ENCODE measurements at regions of chr9 and their contacts with region 1.

Region 1: DNA sequence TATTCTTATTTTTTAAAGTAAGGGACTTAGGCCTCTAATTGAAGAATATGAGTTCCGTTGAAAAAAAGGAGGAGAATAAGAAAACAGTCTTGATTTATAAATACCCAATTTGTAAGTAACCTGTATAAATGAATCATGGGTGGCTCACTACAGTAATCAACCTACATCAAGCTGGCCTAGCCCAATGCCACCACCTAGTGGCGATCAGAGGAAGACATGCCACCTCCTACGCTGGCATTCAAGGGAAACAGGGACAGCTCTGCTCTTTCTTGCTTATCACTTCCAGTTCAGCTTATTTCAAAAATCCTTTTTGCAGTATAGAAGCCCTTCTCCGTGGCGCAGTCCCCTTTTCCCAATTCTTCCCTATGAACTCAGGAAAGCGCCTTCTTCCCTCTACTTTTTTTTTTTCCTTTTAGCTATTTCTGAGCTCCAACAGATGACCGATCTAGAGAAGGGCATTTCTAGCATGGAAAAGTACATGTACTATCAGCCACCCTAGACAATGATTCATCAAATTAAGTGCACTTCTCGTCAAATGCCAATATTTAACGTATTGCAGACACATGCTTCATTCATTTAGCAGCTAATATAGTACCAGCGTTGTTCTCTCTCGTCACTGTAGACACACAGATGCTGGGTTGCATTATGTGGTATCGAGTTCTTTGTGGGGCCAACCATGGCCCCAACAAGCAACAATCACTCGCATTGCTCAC is 28.3 kb downstream of the PTPN3 start:
- DNase-seq: peak; percentile 69 to 86
- ATAC-seq: peak; percentile 97 to 98
- H3K4me3 ChIP-seq: no peak overlapping the region
- H3K27ac ChIP-seq: peak overlapping the region; percentile 66 to 79
- H3K4me1 ChIP-seq: peaks cover 55% of the 10 kb centered on the region
- CTCF ChIP-seq: peak; percentile 93
- EP300 ChIP-seq: no peak
- POLR2A ChIP-seq: no peak
- RAD21 ChIP-seq: peak; percentile 89 to 92

Region 2: DNA sequence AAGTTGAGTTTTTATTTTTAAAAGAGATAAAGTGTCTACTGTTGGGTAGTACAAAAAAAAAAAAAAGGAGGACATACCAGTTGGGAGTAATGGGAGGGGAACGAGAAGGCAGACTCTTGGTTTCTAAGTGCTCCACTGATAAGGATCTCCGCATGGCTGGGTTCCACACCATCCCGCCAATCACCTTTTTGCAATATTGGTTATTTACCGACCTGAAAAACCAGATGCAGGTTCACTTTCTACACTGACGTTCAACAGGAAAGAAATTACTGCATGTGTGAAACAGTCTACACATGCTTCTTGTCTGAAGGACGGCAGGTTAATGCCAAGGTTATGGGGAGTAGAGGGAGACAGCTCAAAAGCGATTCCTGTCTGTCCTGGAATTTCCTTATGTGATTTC is 47.2 kb before region 1 on chr9:
- CTCF ChIA-PET with region 1: interaction called, 20 read pairs
- POLR2A ChIA-PET with region 1: no interaction called
- DNase-seq: no peak
- ATAC-seq: no peak
- H3K4me3 ChIP-seq: no peak overlapping the region
- H3K27ac ChIP-seq: no peak overlapping the region
- H3K4me1 ChIP-seq: no peaks in the 10 kb centered on the region
- CTCF ChIP-seq: no peak
- EP300 ChIP-seq: no peak
- POLR2A ChIP-seq: no peak
- RAD21 ChIP-seq: no peak

Region 3: DNA sequence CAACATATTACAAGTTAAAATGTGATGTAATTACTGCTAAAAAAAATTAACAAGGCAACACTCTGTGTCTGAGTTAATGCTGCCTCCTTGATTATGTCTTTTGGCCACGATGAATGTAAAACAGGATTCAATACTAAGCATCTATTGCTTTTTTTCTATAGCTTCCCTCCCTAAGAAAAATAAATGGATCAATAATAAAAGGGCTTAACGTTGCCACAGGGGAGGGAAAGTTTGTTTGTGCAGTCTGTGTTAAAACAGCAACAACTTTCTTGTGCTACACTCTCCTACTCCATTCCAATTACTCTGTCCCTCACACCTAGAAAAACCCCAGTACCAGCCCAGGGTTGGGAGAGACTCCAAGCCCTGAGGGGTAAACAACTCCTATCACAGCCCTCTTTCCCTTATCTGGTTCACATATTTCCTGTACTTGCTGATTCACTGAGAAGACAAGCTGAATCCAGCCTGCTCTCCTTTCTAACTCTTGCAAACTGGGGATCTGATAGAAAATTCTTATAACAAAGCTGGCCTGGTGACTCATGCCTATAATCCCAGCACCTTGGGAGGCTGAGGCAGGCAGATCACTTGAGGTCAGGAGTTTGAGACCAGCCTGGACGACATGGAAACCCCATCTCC is 16.5 kb before region 1 on chr9:
- CTCF ChIA-PET with region 1: interaction called, 173 read pairs
- POLR2A ChIA-PET with region 1: interaction called, 3 read pairs
- DNase-seq: peak; percentile 42 to 71
- ATAC-seq: peak; percentile 84 to 88
- H3K4me3 ChIP-seq: no peak overlapping the region
- H3K27ac ChIP-seq: peak overlapping the region; percentile 81 to 87
- H3K4me1 ChIP-seq: peaks cover 56% of the 10 kb centered on the region
- CTCF ChIP-seq: no peak
- EP300 ChIP-seq: peak in 1 of 2 experiments; percentile 19; a peak in 1 of 5 replicates
- POLR2A ChIP-seq: no peak
- RAD21 ChIP-seq: no peak

Region 4: GRCh38 chr9:109499631-109500410 is 30.0 kb after region 1 on chr9:
- CTCF ChIA-PET with region 1: interaction called, 18 read pairs
- POLR2A ChIA-PET with region 1: interaction called, 9 read pairs
- DNase-seq: peak; percentile 69 to 74
- ATAC-seq: peak; percentile 82 to 95
- H3K4me3 ChIP-seq: peak overlapping the region; percentile 50
- H3K27ac ChIP-seq: peak overlapping the region; percentile 61 to 97
- H3K4me1 ChIP-seq: peaks cover 24% of the 10 kb centered on the region
- CTCF ChIP-seq: no peak
- EP300 ChIP-seq: no peak
- POLR2A ChIP-seq: peak; percentile 41; the same call in 1 of the 2 replicates
- RAD21 ChIP-seq: no peak

Region 5: DNA sequence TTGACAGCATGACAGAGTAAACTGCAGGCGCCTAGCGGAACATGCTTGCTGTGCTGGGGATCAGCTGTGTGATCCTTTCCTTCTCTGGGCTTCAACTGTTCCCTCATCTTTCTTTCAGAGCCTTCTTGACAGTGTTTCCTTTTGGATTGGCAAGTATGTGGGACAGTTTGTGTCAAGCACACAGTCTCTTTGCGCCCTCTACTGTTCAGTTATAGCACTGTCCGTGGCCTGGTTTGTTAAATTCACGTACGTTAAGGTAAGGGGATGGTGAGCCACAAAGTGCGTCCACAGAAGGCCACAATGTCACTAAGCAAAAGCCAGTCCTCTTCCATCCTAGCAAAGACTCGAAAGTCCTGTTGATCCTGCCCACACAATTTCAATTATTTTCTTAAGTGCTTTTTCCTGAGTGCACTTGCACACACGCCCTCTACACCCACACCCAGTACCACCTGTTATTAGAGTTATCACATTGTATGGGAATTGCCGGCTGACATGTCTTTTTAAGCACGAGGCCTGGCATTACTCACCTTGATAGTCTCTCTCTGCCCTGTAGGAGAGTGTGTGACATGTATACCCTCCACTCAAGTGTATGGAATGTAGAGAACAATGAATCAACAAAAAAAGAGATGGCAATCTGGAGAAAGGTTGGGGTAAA is 50.8 kb after region 1 on chr9:
- CTCF ChIA-PET with region 1: interaction called, 19 read pairs
- POLR2A ChIA-PET with region 1: interaction called, 5 read pairs
- DNase-seq: peak; percentile 81
- ATAC-seq: peak; percentile 95 to 98
- H3K4me3 ChIP-seq: no peak overlapping the region
- H3K27ac ChIP-seq: no peak overlapping the region
- H3K4me1 ChIP-seq: no peaks in the 10 kb centered on the region; the same call in 2 of the 3 replicates
- CTCF ChIP-seq: peak; percentile 95
- EP300 ChIP-seq: no peak
- POLR2A ChIP-seq: no peak
- RAD21 ChIP-seq: peak; percentile 96 to 97

Region 6: GRCh38 chr9:109560457-109561132 is 90.8 kb after region 1 on chr9:
- CTCF ChIA-PET with region 1: no interaction called
- POLR2A ChIA-PET with region 1: no interaction called
- DNase-seq: peak in 1 of 2 experiments; percentile 28
- ATAC-seq: peak; percentile 72 to 86; a peak in 5 of 6 replicates
- H3K4me3 ChIP-seq: no peak overlapping the region
- H3K27ac ChIP-seq: no peak overlapping the region
- H3K4me1 ChIP-seq: no peaks in the 10 kb centered on the region
- CTCF ChIP-seq: no peak
- EP300 ChIP-seq: no peak
- POLR2A ChIP-seq: no peak
- RAD21 ChIP-seq: 0 out of 5 replicates have a peak, but pooled peaks of 1 of the 2 experiments have one; percentile 9

Measured in A549 (cell line).